AG04449 (cell line): ENCODE measurements at regions of chr7 and their contacts with region 1.

Region 1: GRCh38 chr7:139502226-139502625 is 18.8 kb upstream of the KLRG2 start:
- DNase-seq: no peak
- H3K4me3 ChIP-seq: no peak overlapping the region
- CTCF ChIP-seq: no peak

Region 2: GRCh38 chr7:139426258-139427028 is 75.8 kb before region 1 on chr7:
- CTCF ChIA-PET with region 1: no interaction called
- POLR2A ChIA-PET with region 1: no interaction called
- DNase-seq: no peak
- H3K4me3 ChIP-seq: no peak overlapping the region
- CTCF ChIP-seq: no peak

Region 3: GRCh38 chr7:139490133-139490532 is 12.1 kb before region 1 on chr7:
- CTCF ChIA-PET with region 1: interaction called, 30 read pairs
- POLR2A ChIA-PET with region 1: no interaction called
- DNase-seq: no peak
- H3K4me3 ChIP-seq: no peak overlapping the region
- CTCF ChIP-seq: no peak